ENCODE measurements at regions of chr5 and their contacts with region 1.

Region 1: DNA sequence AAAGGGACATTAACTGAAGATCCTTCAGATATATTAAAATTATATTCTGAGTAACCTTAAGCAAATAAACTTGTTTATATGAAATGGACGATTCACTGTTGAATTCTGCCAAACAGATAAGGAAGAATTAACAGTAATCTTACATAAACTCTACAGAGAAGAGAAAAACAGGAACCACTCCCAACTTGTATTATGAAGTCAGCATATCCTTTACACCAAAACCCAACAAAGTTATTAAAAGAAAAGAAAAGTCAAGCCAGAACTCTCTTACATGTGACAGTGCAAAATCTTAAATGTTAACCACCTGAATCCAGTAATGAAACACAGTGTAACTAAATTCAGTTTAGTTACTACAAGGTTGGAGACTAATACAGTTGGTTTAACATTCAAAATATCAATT is 185.8 kb downstream of the DEPDC1B start:
- DNase-seq: no peak
- H3K4me3 ChIP-seq: no peak overlapping the region
- H3K27ac ChIP-seq: no peak overlapping the region
- H3K4me1 ChIP-seq: no peaks in the 10 kb centered on the region
- H3K27me3 ChIP-seq: no peaks in the 10 kb centered on the region
- CTCF ChIP-seq: no peak

Region 2: DNA sequence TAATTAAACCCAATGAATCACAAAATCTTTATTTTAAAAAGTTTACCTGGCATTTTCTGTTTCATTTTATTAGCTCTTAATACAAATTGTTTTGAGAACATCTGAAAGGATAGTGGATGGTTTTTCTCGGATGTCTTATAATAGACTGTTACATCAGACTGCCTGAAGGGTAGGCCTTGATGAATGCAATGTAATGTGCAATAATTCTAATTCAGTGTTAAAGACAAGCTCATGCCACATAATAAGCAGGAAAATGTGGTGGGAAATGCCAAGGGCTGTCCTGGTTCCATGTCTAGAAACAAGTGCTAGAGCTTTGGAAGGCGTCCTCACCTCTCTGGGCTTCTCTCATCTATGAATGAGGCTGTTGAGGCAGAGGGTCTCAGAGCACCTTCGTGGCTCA is 37.7 kb after region 1 on chr5:
- CTCF ChIA-PET with region 1: no interaction called
- POLR2A ChIA-PET with region 1: no interaction called
- intact Hi-C with region 1: loop called (anchors 1 kb)
- DNase-seq: no peak
- H3K4me3 ChIP-seq: no peak overlapping the region
- H3K27ac ChIP-seq: no peak overlapping the region
- H3K4me1 ChIP-seq: no peaks in the 10 kb centered on the region
- H3K27me3 ChIP-seq: no peaks in the 10 kb centered on the region
- CTCF ChIP-seq: no peak

Measured in PC-9 (cell line).